ENCODE measurements at regions of chr2 and their contacts with region 1.

Region 1: GRCh38 chr2:158600155-158600802 is 143.5 kb downstream of the PKP4 start:
- DNase-seq: peak; percentile 54
- H3K4me3 ChIP-seq: no peak overlapping the region
- H3K27ac ChIP-seq: no peak overlapping the region
- H3K4me1 ChIP-seq: no peaks in the 10 kb centered on the region
- H3K27me3 ChIP-seq: no peaks in the 10 kb centered on the region
- CTCF ChIP-seq: no peak
- POLR2A ChIP-seq: no peak

Region 2: GRCh38 chr2:158518075-158518474 is 82.2 kb before region 1 on chr2:
- intact Hi-C with region 1: no loop called
- DNase-seq: no peak
- H3K4me3 ChIP-seq: no peak overlapping the region
- H3K27ac ChIP-seq: no peak overlapping the region
- H3K4me1 ChIP-seq: no peaks in the 10 kb centered on the region
- H3K27me3 ChIP-seq: no peaks in the 10 kb centered on the region
- CTCF ChIP-seq: no peak
- POLR2A ChIP-seq: no peak

Region 3: GRCh38 chr2:158650646-158651357 is 50.5 kb after region 1 on chr2:
- intact Hi-C with region 1: no loop called
- DNase-seq: no peak
- H3K4me3 ChIP-seq: no peak overlapping the region
- H3K27ac ChIP-seq: no peak overlapping the region
- H3K4me1 ChIP-seq: no peaks in the 10 kb centered on the region
- H3K27me3 ChIP-seq: no peaks in the 10 kb centered on the region
- CTCF ChIP-seq: no peak
- POLR2A ChIP-seq: no peak

Region 4: DNA sequence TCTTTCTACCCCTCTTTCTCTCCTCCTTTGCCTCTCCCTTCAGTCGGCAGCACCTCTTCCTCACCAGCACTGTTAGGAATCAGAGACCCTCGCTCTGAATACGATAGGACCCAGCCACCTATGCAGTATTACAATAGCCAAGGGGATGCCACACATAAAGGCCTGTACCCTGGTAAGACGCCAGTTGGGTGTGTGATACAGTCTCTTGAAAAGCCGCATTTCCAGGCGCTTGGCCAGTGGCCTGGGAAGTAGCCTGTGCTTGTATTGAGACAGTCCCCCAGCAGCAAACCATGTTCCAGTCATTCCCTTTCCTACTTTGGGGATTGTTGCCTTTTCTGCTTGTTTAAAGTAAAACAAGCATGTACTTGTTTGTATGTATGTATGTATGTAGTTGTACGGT is 76.4 kb after region 1 on chr2:
- intact Hi-C with region 1: no loop called
- DNase-seq: peak; percentile 31
- H3K4me3 ChIP-seq: no peak overlapping the region
- H3K27ac ChIP-seq: no peak overlapping the region
- H3K4me1 ChIP-seq: no peaks in the 10 kb centered on the region
- H3K27me3 ChIP-seq: no peaks in the 10 kb centered on the region
- CTCF ChIP-seq: no peak
- POLR2A ChIP-seq: no peak

Region 5: DNA sequence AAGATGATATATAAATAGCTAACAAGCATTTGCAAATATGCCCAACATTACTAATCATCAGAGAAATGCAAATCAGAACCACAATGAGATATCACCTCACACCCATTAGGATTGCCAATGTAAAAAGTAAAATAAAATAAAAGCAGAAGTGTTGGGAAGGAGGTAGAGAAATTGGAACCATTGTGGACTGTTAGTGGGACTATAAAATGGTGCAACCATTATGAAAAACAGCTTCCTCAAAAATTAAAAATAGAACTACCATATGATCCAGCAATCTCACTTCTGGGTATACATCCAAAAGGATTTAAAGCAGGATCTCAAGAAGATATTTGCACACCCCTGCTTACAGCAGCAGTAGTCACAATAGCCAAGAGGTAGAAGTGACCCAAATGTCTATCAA is 95.0 kb after region 1 on chr2:
- intact Hi-C with region 1: no loop called
- DNase-seq: no peak
- H3K4me3 ChIP-seq: no peak overlapping the region
- H3K27ac ChIP-seq: no peak overlapping the region
- H3K4me1 ChIP-seq: no peaks in the 10 kb centered on the region
- H3K27me3 ChIP-seq: no peaks in the 10 kb centered on the region
- CTCF ChIP-seq: no peak
- POLR2A ChIP-seq: no peak

Region 6: GRCh38 chr2:158882297-158882696 is 282.0 kb after region 1 on chr2:
- intact Hi-C with region 1: loop called (anchors 5 kb)
- DNase-seq: no peak
- H3K4me3 ChIP-seq: no peak overlapping the region
- H3K27ac ChIP-seq: no peak overlapping the region
- H3K4me1 ChIP-seq: no peaks in the 10 kb centered on the region
- H3K27me3 ChIP-seq: no peaks in the 10 kb centered on the region
- CTCF ChIP-seq: no peak
- POLR2A ChIP-seq: no peak